ENCODE measurements at regions of chr2 and their contacts with region 1.

Region 1: DNA sequence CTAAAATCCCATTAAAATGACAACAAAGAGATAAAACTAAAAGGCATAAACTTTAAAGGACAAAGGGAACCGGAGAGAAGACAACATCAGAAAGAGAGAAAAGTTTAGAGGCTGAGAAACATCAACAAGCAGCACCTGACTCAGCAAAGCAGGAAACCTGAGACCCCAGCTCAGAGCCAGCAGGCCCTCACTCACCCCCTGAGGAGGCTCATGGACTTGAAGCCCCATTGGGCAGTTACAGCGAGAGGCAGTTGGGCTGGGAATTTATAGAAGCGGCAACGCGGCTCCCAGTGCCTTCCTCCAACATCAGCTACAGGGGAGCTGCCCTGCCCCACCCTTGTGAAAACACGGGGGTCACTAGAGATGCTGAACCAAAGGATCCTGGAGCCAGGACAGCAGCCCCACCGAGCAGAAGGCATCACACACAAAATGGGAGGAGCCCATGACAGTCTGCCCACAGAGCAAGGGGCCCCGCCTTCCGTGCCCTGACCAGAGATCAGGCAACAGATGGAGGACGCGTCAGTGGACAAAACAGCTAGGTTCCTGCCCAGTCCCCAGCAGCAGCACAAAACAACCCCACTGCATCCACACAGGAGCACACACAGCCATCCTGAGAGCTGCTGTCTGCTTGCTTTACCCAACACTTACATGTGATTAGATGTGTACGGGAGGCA is 52.7 kb downstream of the CMPK2 start:
- DNase-seq: peak; percentile 30
- H3K4me3 ChIP-seq: peak overlapping the region; percentile 35
- H3K27ac ChIP-seq: peak overlapping the region; percentile 32
- H3K4me1 ChIP-seq: peaks cover 70% of the 10 kb centered on the region
- CTCF ChIP-seq: no peak

Region 2: DNA sequence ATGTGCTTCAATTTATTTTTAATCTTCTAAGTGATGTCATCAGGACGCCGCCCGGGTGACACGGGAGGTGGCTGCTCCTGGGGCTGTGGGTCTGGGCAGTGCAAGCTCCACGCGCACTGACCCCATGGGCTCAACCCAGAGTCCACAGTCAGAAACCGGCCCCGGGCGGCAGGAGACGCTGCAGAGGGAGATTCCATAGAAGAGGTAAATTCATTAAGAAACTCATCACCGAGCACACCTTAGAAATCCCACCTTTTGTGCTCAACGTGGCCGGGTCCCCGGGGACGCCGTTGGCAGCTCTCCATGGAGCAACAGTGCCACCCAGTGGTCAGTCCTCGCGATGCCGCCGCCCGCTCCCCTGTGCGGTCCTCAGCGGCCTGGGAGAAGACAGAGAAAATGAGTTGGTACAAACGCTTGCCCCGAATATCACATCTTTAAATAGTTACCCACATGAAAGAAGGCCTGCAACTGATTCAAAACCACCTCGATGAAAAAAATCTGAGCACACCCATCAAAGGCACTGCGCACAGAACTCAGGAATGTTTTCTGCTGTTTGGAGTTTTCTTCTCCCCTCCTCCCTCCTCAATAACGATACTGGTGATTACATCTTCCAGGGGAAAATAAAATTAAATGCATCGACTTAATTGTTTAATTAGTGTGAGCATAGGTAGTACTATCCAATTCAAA is 39.8 kb before region 1 on chr2:
- CTCF ChIA-PET with region 1: no interaction called
- POLR2A ChIA-PET with region 1: interaction called, 3 read pairs
- intact Hi-C with region 1: loop called (anchors 5 kb)
- DNase-seq: peak; percentile 78
- H3K4me3 ChIP-seq: peak overlapping the region; percentile 54
- H3K27ac ChIP-seq: peak overlapping the region; percentile 24
- H3K4me1 ChIP-seq: peaks cover 46% of the 10 kb centered on the region
- CTCF ChIP-seq: peak; percentile 98

Measured in OCI-LY7 (cell line).